ENCODE measurements at regions of chr9 and their contacts with region 1.

Region 1: GRCh38 chr9:87004016-87004415 is 56.7 kb upstream of the GAS1 start:
- DNase-seq: no peak
- ATAC-seq: no peak
- H3K4me3 ChIP-seq: no peak overlapping the region
- H3K4me3 Mint-ChIP-seq: no peak overlapping the region
- H3K27ac ChIP-seq: no peak overlapping the region
- H3K27ac Mint-ChIP-seq: no peak overlapping the region
- H3K4me1 ChIP-seq: no peaks in the 10 kb centered on the region
- H3K4me1 Mint-ChIP-seq: no peaks in the 10 kb centered on the region
- H3K27me3 ChIP-seq: no peaks in the 10 kb centered on the region
- H3K27me3 Mint-ChIP-seq: peaks cover 17% of the 10 kb centered on the region
- CTCF ChIP-seq: no peak

Region 2: DNA sequence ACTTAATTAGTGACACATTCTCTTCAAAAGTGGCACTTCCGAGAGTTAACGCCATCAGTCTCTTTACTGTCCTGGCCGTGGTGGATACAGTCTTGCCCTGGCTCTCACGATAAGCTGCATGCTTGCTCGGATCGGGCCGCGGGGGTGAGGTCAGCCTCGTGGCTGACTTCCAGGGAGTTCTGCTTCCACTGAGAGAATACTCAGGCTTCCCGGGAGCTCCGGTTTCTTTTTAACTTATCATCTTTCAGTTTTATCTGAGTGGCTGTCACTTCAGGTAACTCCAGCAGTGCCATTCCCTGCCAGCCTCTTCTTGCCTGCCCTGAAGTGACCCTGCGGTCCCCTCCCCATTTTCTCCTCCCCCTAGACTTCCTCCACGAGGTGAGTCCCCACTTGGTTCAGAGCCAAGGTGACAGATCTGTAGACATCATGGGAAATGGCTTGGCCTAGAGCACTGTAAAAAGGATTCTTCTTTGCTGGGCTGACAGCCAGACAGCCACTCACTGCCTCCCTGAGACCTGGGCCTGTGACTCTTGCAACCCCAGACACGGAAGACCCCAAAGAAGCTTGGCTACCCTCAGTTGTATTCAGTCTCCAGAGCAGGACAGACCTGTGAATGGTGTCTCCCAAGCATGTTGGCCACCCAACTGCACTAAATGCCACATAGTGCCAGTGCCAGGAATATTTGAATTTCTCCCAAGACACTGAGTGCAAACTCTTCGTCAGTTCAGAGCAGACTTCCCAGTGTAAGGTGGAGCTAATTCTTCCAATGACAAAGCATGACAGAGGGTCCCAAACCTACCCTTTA is 588.7 kb after region 1 on chr9:
- CTCF ChIA-PET with region 1: no interaction called
- POLR2A ChIA-PET with region 1: no interaction called
- intact Hi-C with region 1: loop called in 1 of 2 experiments (anchors 5 kb)
- DNase-seq: no peak
- ATAC-seq: no peak
- H3K4me3 ChIP-seq: no peak overlapping the region
- H3K4me3 Mint-ChIP-seq: no peak overlapping the region
- H3K27ac ChIP-seq: no peak overlapping the region
- H3K27ac Mint-ChIP-seq: no peak overlapping the region
- H3K4me1 ChIP-seq: no peaks in the 10 kb centered on the region
- H3K4me1 Mint-ChIP-seq: peaks cover 3% of the 10 kb centered on the region
- H3K27me3 ChIP-seq: no peaks in the 10 kb centered on the region
- H3K27me3 Mint-ChIP-seq: no peaks in the 10 kb centered on the region
- CTCF ChIP-seq: no peak

Measured in CD4-positive, alpha-beta T cell (primary cell).